Psoas muscle (tissue), 8 donors: ENCODE measurements at regions of chr13 and their contacts with region 1.

Region 1: GRCh38 chr13:98576963-98577822 is at the start of gene STK24:
- DNase-seq: peak; percentile 82 to 84
- ATAC-seq: peak; percentile 76 to 89 (median 82)
- H3K4me3 ChIP-seq: peak within 1 kb of the TSS; percentile 98
- H3K27ac ChIP-seq: peak within 1 kb of the TSS; percentile 97
- H3K4me1 ChIP-seq: peaks cover 31% of the 10 kb centered on the region
- H3K27me3 ChIP-seq: no peaks in the 10 kb centered on the region
- CTCF ChIP-seq: no peak
- total RNA-seq, gene STK24: 27.2 to 38.7 (median 33.9) TPM

Region 2: GRCh38 chr13:98484289-98485219 is 92.6 kb before region 1 on chr13:
- intact Hi-C with region 1: loop called (anchors 5 kb)
- DNase-seq: peak; percentile 82 to 88
- ATAC-seq: peak; percentile 85 to 89 (median 86)
- H3K4me3 ChIP-seq: peak overlapping the region; percentile 37
- H3K27ac ChIP-seq: peak overlapping the region; percentile 87
- H3K4me1 ChIP-seq: peaks cover 68% of the 10 kb centered on the region
- H3K27me3 ChIP-seq: no peaks in the 10 kb centered on the region
- CTCF ChIP-seq: no peak

Region 3: DNA sequence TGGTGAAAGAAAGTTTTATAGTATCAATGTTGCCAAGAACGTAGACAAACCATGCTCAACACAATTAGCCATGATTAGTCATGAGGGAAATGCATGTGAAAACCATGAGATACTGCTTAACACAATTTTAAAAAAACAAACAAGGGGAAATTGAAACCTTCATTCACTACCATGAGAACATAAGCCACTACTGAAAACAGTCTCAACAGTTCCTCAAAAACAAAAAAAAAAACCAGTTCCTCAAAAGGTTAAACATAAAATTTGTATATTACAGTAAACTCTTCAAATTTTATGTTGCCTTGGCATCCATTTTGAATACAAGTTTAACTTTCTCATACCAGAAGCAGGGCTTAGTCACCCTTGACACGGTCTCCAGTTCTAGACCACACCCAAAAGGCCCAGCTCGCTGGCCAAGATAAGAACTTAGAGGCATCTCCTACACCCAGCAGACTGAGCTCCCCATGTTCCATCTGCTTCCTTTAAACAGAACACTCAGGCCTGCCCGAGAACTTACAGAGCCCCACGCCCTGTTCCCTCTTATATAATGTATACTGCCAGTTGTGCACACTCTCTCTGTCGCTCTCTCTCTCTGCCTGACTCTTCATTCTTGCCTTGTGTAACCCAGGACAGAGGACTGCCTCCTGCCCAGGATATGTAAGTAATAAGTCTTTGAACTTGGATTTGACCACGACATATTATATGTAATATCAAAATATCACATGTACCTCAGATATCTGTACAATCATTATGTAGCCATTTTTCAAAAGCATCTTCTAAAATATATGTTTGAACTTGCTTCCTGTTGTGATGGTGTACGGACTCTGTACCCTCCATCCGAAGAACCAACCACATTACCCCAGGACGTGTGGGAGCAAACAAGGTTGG is 67.7 kb before region 1 on chr13:
- intact Hi-C with region 1: loop called in 1 of 2 experiments (anchors 5 kb)
- DNase-seq: peak in 1 of 2 donors; percentile 60
- ATAC-seq: peak; percentile 51 to 67 (median 64)
- H3K4me3 ChIP-seq: no peak overlapping the region
- H3K27ac ChIP-seq: peak overlapping the region; percentile 58
- H3K4me1 ChIP-seq: peaks cover 44% of the 10 kb centered on the region
- H3K27me3 ChIP-seq: no peaks in the 10 kb centered on the region
- CTCF ChIP-seq: no peak

Region 4: GRCh38 chr13:98520674-98521449 is 56.3 kb before region 1 on chr13:
- intact Hi-C with region 1: no loop called
- DNase-seq: no peak
- ATAC-seq: no peak
- H3K4me3 ChIP-seq: no peak overlapping the region
- H3K27ac ChIP-seq: no peak overlapping the region
- H3K4me1 ChIP-seq: peaks cover 61% of the 10 kb centered on the region
- H3K27me3 ChIP-seq: no peaks in the 10 kb centered on the region
- CTCF ChIP-seq: no peak

Region 5: DNA sequence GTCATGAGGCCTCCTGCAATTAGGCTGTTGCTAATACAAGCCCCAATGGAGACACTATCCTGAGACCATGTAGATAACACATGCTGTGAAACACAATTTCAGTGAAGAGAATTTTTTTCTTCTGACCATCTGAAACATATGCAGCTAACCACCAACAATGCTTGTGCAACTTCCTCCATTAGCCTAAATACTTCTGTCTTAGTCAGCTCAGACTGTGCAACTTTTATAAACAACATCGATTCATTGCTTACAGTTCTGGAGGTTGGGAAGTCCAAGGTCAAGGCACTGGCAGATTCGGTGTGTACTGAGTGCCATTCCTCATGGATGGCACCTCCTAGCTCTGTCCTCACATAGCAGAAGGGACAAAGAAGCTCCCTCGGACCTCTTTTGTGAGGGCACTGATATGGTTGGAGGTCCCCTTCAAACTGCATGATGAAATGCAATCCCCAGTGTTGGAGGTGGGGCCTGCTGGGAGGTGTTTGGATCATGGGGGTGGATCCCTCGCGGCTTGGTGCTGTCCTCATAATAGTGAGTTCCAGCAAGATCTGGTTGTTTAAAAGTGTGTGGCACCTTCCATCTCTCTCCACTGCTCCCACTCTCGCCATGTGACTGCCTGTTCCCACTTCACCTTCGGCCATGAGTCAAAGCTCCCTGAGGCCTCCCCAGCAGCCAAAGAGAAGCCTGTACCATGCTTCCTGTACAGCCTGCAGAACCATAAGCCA is 28.0 kb before region 1 on chr13:
- intact Hi-C with region 1: no loop called
- DNase-seq: no peak
- ATAC-seq: peak; percentile 25 to 67 (median 52)
- H3K4me3 ChIP-seq: no peak overlapping the region
- H3K27ac ChIP-seq: peak overlapping the region; percentile 1
- H3K4me1 ChIP-seq: peaks cover 31% of the 10 kb centered on the region
- H3K27me3 ChIP-seq: no peaks in the 10 kb centered on the region
- CTCF ChIP-seq: no peak

Region 6: GRCh38 chr13:98653463-98653985 is 76.3 kb after region 1 on chr13:
- intact Hi-C with region 1: loop called in 1 of 2 experiments (anchors 5 kb)
- DNase-seq: peak; percentile 68 to 79
- ATAC-seq: peak; percentile 91 to 96 (median 94)
- H3K4me3 ChIP-seq: no peak overlapping the region
- H3K27ac ChIP-seq: no peak overlapping the region
- H3K4me1 ChIP-seq: no peaks in the 10 kb centered on the region
- H3K27me3 ChIP-seq: peaks cover 0 to 5% (median 0%) of the 10 kb centered on the region in 3 donors
- CTCF ChIP-seq: peak; percentile 88

Region 7: DNA sequence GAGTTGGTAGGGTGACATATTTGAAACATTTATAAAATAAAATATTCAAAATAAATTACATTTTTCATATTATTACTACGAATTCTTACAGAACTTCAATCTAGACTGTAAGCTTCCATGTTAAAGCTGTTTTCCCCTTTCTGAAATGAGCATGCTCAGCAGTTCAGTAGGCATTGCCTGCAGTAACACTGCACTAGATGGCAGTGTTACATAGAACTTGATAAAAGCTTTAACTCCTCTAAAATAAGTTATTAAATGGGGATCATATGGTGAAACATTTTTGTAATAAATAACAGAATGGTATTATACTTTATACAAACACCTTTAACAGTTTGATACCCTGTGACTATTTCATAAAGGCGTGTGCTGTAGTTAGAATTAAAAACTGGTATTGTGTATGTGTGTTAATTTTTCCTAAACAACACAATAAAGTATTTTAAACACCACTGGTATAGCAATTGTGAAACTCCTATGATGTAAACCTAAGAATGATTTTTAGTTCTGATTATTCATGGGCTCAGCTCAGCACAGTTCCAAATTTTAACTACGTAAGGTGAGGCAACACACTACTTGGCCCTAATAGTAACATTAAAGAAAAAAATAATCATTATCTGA is 692.5 kb after region 1 on chr13:
- intact Hi-C with region 1: no loop called
- DNase-seq: no peak
- ATAC-seq: peak; percentile 60 to 84 (median 73)
- H3K4me3 ChIP-seq: no peak overlapping the region
- H3K27ac ChIP-seq: no peak overlapping the region
- H3K4me1 ChIP-seq: peaks cover 11% of the 10 kb centered on the region
- H3K27me3 ChIP-seq: no peaks in the 10 kb centered on the region
- CTCF ChIP-seq: peak; percentile 66